Activated CD8-positive, alpha-beta T cell treated with anti-CD3 and anti-CD28 coated beads, Interleukin-2, amount 10 ng/mL, durations not matched to agents 7 days and 5 days (primary cell): ENCODE measurements at regions of chr10 and their contacts with region 1.

Region 1: GRCh38 chr10:26697163-26697921 is at the start of gene PDSS1:
- DNase-seq: peak; percentile 72
- ATAC-seq: peak; percentile 86
- H3K4me3 Mint-ChIP-seq: peak within 1 kb of the TSS; percentile 99
- H3K27ac Mint-ChIP-seq: peak within 1 kb of the TSS; percentile 92
- H3K4me1 Mint-ChIP-seq: peaks cover 35% of the 10 kb centered on the region
- H3K27me3 Mint-ChIP-seq: no peaks in the 10 kb centered on the region
- total RNA-seq, gene PDSS1: 17.8 to 19.4 TPM

Region 2: DNA sequence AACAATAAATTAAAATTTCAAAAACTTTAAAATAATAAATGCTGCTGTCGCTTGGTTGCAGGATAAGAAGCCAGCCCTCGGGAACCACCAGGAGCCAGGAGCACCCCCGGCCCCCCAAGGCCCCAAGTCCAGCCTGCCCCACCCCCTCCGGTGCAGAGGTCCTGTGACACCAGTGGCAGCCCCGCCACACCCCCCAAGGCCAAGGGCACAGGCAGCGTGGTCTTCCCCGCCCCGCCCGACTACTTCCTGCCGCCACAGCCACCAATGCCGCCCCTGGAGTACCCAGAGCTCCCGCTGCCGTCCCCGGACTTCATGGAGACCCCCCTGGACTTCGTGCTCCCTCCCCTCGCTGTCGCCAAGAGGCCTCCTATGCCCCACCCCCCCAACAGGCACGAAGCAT is 44.3 kb before region 1 on chr10:
- CTCF ChIA-PET with region 1: no interaction called
- POLR2A ChIA-PET with region 1: no interaction called
- DNase-seq: no peak
- ATAC-seq: no peak
- H3K4me3 Mint-ChIP-seq: no peak overlapping the region
- H3K27ac Mint-ChIP-seq: no peak overlapping the region
- H3K4me1 Mint-ChIP-seq: no peaks in the 10 kb centered on the region
- H3K27me3 Mint-ChIP-seq: peaks cover 5% of the 10 kb centered on the region

Region 3: DNA sequence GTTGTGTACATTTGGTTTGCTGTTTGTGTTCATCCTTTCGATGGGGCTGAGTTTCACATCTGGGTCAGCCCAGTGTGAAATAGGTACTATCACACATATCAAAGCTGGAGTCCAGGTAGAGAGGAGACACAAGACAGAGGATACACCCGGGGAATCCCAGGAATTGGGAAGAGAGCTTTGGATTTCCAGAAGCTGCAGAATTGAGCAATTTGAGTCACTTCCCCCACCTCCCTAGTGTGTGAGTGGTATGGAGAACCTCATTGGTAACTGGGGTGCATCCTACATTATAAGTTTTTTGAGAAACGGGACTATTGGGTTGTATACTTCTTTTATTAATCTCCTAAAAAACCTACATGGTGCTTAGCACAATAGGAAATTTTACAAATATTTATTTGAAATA is 11.9 kb before region 1 on chr10:
- CTCF ChIA-PET with region 1: interaction called, 11 read pairs
- POLR2A ChIA-PET with region 1: interaction called, 5 read pairs
- DNase-seq: no peak
- ATAC-seq: no peak
- H3K4me3 Mint-ChIP-seq: no peak overlapping the region
- H3K27ac Mint-ChIP-seq: no peak overlapping the region
- H3K4me1 Mint-ChIP-seq: peaks cover 31% of the 10 kb centered on the region
- H3K27me3 Mint-ChIP-seq: peaks cover 2% of the 10 kb centered on the region

Region 4: GRCh38 chr10:27155066-27155754 is 457.9 kb after region 1 on chr10 and contains the start of gene MASTL:
- CTCF ChIA-PET with region 1: no interaction called
- POLR2A ChIA-PET with region 1: interaction called, 14 read pairs
- DNase-seq: peak; percentile 95
- ATAC-seq: peak; percentile 80
- H3K4me3 Mint-ChIP-seq: peak within 1 kb of the TSS; percentile 99
- H3K27ac Mint-ChIP-seq: peak within 1 kb of the TSS; percentile 100
- H3K4me1 Mint-ChIP-seq: peaks cover 43% of the 10 kb centered on the region
- H3K27me3 Mint-ChIP-seq: no peaks in the 10 kb centered on the region
- total RNA-seq, gene MASTL: 40.1 to 40.7 TPM